Activated CD4-positive, alpha-beta memory T cell treated with anti-CD3 and anti-CD28 coated beads for 36 hours (primary cell): ENCODE measurements at regions of chr11 and their contacts with region 1.

Region 1: GRCh38 chr11:116835791-116836631 is 1.4 kb downstream of the APOA1 start:
- DNase-seq: peak; percentile 88
- H3K4me3 Mint-ChIP-seq: peak overlapping the region; percentile 63
- H3K27ac Mint-ChIP-seq: no peak overlapping the region
- H3K4me1 Mint-ChIP-seq: peaks cover 12% of the 10 kb centered on the region
- H3K27me3 Mint-ChIP-seq: no peaks in the 10 kb centered on the region

Region 2: DNA sequence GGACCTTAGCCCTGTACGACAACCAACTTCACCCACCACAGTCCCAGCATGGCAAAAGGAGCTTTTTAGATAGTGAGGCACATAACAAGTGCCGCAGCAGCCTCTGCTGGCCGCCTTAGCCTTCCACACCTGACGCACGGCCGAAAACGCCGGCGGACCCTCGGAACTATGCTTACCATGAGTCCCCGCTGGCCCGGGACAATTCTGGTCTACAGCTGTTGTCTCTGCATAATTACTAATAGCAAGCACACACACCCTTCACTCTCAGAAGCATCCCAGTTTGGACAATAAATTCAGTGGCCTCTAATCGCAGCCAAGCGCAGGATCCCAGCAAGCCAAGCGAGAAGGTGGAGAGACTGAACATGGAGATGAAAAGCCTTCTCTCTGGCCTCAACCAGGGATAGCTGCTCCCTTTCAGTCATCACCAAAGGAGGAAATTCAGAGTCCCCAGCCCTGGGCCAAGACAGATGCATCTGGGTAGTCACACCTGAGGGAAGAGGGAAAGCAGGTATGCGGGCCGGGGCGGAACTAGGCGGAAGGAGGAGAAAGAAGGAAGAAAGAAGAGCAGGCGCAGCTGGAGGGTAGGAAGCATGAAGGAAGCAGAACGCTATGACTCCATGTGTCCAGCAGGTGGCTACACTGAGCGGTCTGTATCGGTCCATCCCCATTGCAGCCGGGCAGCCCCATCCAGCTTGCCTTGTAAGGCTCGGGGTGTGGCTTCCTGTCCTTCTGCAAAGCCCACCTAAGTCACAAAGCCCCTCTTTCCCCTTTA is 103.6 kb before region 1 on chr11:
- CTCF ChIA-PET with region 1: interaction called, 45 read pairs
- POLR2A ChIA-PET with region 1: interaction called, 4 read pairs
- intact Hi-C with region 1: loop called (anchors 5 kb)
- DNase-seq: peak; percentile 73
- H3K4me3 Mint-ChIP-seq: no peak overlapping the region
- H3K27ac Mint-ChIP-seq: no peak overlapping the region
- H3K4me1 Mint-ChIP-seq: peaks cover 10% of the 10 kb centered on the region
- H3K27me3 Mint-ChIP-seq: no peaks in the 10 kb centered on the region

Region 3: DNA sequence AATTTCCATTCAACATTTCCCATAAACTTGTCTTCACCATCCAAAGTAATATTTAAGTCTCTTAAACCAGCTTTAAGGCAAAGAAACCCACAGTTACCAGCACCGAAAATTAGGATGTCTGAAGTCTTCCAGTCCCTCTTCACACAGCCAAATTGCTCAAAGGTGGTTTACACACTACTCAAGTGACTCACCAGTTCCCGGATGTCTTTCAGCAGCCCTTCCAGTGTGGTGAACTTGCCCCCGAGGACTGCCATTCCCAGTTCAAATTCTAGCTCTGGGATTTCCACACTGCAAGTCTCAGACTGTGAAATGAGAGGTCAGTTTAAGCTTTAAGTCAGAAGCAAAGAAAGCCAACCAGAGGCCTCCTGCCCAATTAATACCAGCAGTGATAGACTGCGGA is 53.3 kb before region 1 on chr11:
- CTCF ChIA-PET with region 1: interaction called, 187 read pairs
- POLR2A ChIA-PET with region 1: interaction called, 9 read pairs
- intact Hi-C with region 1: no loop called
- DNase-seq: peak; percentile 56
- H3K4me3 Mint-ChIP-seq: peak overlapping the region; percentile 33
- H3K27ac Mint-ChIP-seq: peak overlapping the region; percentile 88
- H3K4me1 Mint-ChIP-seq: peaks cover 89% of the 10 kb centered on the region
- H3K27me3 Mint-ChIP-seq: no peaks in the 10 kb centered on the region

Region 4: GRCh38 chr11:116821050-116821918 is 14.7 kb before region 1 on chr11:
- CTCF ChIA-PET with region 1: interaction called, 14 read pairs
- POLR2A ChIA-PET with region 1: no interaction called
- intact Hi-C with region 1: no loop called
- DNase-seq: no peak
- H3K4me3 Mint-ChIP-seq: no peak overlapping the region
- H3K27ac Mint-ChIP-seq: no peak overlapping the region
- H3K4me1 Mint-ChIP-seq: no peaks in the 10 kb centered on the region
- H3K27me3 Mint-ChIP-seq: no peaks in the 10 kb centered on the region

Region 5: DNA sequence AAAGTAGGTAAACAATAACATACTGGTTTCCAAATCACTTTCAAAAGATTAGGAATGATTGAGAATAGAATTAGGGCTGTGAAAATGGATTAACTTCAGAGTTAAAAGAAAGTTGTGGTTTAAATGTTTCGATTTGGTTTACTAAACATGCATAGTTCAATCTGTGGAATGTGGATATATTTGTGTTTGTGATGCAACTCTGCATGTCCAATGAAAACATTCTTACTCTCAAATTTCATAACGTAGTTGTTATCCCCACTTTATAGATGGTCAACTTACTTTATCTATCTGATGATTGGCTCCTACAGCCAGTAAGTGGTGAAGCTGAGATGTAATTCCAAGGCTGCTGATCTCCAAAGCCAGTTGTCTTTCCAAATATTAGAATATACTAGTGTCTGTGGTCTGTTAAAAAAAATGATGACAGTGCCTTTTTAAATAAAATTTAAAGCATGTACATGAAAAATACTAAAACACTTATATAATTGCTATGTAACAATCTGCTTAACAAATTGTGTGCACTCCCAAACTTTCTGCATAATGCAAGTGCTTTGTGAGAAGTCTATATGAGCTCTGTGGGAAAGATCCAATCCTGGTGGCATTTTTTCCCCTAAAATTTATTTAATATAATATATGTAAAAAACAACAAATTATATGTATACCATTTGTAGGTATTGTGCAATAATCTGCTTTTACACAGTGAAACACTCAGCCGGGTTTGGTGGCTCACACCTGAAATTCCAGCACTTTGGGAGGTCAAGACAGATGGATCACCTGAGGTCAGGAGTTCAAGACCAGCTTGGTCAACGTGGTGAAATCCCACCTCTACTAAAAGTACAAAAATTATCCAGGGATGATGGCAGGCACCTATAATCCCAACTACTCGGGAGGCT is 271.9 kb after region 1 on chr11:
- CTCF ChIA-PET with region 1: interaction called, 34 read pairs
- POLR2A ChIA-PET with region 1: no interaction called
- intact Hi-C with region 1: no loop called
- DNase-seq: no peak
- H3K4me3 Mint-ChIP-seq: no peak overlapping the region
- H3K27ac Mint-ChIP-seq: no peak overlapping the region
- H3K4me1 Mint-ChIP-seq: no peaks in the 10 kb centered on the region
- H3K27me3 Mint-ChIP-seq: no peaks in the 10 kb centered on the region